K562 (cell line): ENCODE measurements at regions of chr4 and their contacts with region 1.

Region 1: GRCh38 chr4:38319456-38320342 is 344.3 kb upstream of the KLF3 start:
- DNase-seq: peak; percentile 83 to 94 (median 85)
- ATAC-seq: peak; percentile 81
- H3K4me3 ChIP-seq: no peak overlapping the region; the same call in 1 of the 2 replicates
- H3K27ac ChIP-seq: peak overlapping the region; percentile 84
- H3K4me1 ChIP-seq: peaks cover 8 to 29% of the 10 kb centered on the region in 2 experiments
- H3K27me3 ChIP-seq: no peaks in the 10 kb centered on the region
- CTCF ChIP-seq: peak; percentile 88 to 96 (median 92)
- EP300 ChIP-seq: peak; percentile 3; the same call in 1 of the 2 replicates
- POLR2A ChIP-seq: no peak
- RAD21 ChIP-seq: peak; percentile 91 to 93

Region 2: GRCh38 chr4:38078590-38079421 is 240.9 kb before region 1 on chr4:
- CTCF ChIA-PET with region 1: no interaction called
- POLR2A ChIA-PET with region 1: no interaction called
- in situ Hi-C with region 1: loop called (anchors 10 kb)
- intact Hi-C with region 1: no loop called
- DNase-seq: no peak
- ATAC-seq: no peak
- H3K4me3 ChIP-seq: no peak overlapping the region
- H3K27ac ChIP-seq: no peak overlapping the region
- H3K4me1 ChIP-seq: peaks cover 0 to 15% of the 10 kb centered on the region in 2 experiments; a peak in 4 of 5 replicates
- H3K27me3 ChIP-seq: no peaks in the 10 kb centered on the region; a peak in 2 of 5 replicates
- CTCF ChIP-seq: no peak
- EP300 ChIP-seq: no peak
- POLR2A ChIP-seq: no peak
- RAD21 ChIP-seq: no peak

Region 3: GRCh38 chr4:38243388-38244053 is 76.2 kb before region 1 on chr4:
- CTCF ChIA-PET with region 1: no interaction called
- POLR2A ChIA-PET with region 1: no interaction called
- in situ Hi-C with region 1: no loop called
- intact Hi-C with region 1: loop called (anchors 5 kb)
- DNase-seq: peak in 1 of 4 experiments; percentile 22
- ATAC-seq: peak; percentile 82
- H3K4me3 ChIP-seq: no peak overlapping the region
- H3K27ac ChIP-seq: peak overlapping the region; percentile 88
- H3K4me1 ChIP-seq: peaks cover 11 to 18% of the 10 kb centered on the region in 2 experiments
- H3K27me3 ChIP-seq: no peaks in the 10 kb centered on the region
- CTCF ChIP-seq: no peak
- EP300 ChIP-seq: no peak
- POLR2A ChIP-seq: no peak; the same call in 1 of the 2 replicates
- RAD21 ChIP-seq: no peak

Region 4: GRCh38 chr4:38461342-38461741 is 141.6 kb after region 1 on chr4:
- CTCF ChIA-PET with region 1: no interaction called
- POLR2A ChIA-PET with region 1: no interaction called
- in situ Hi-C with region 1: no loop called
- intact Hi-C with region 1: loop called (anchors 10 kb)
- DNase-seq: no peak
- ATAC-seq: no peak
- H3K4me3 ChIP-seq: no peak overlapping the region
- H3K27ac ChIP-seq: no peak overlapping the region
- H3K4me1 ChIP-seq: peaks cover 4 to 31% of the 10 kb centered on the region in 2 experiments; a peak in 4 of 5 replicates
- H3K27me3 ChIP-seq: no peaks in the 10 kb centered on the region
- CTCF ChIP-seq: no peak
- EP300 ChIP-seq: no peak
- POLR2A ChIP-seq: no peak
- RAD21 ChIP-seq: no peak

Region 5: DNA sequence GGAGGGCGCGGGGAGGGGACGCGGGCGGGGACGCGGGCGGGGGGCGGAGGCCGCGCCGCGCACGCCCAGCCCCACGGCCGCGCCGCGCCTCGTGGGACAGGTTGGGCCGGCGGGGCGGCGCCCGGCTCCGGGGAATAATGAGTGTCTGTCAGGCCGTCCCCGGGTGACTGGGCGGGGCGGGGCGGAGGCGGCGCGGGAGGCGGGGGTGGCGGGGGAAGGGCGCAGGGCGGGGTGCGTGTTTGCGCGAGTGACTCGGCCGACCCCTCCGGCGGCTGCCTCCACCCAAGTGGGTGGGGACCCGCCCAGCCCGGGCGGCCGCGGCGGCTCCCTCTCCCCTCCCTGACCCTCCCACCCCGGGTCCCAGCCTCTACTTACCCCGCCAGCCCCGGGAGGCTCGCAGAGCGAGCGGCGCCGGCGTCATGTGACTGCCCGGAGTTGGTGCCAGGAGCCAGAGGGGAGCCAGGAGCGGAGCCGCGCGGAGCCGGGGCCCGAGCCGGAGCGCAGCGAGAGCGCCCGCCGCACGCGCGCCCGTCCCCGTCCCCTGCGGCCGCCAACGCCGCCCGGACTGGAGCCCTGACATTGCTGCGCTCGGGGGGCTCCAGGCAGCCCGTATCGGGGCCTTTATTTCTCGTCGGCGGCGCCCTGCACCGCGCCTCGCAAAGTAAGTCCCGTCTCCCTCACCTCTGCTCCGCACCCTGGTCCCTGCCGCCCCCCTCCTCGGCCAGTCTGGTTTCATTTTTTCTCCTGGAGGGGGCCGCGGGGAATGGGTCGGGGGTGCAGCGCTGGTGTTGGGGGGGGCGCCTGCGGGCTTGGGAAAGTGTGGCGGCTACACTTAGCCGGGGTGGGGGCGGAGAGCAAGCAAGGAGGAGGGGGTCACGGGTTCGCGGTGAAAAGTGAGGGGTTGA is 344.4 kb after region 1 on chr4 and contains the start of gene KLF3:
- CTCF ChIA-PET with region 1: no interaction called
- POLR2A ChIA-PET with region 1: interaction called, 7 read pairs
- in situ Hi-C with region 1: no loop called
- intact Hi-C with region 1: loop called (anchors 2 kb)
- DNase-seq: peak; percentile 88 to 92 (median 90)
- ATAC-seq: peak; percentile 68
- H3K4me3 ChIP-seq: peak within 1 kb of the TSS; percentile 92
- H3K27ac ChIP-seq: peak within 1 kb of the TSS; percentile 98
- H3K4me1 ChIP-seq: peaks cover 17 to 33% of the 10 kb centered on the region in 2 experiments
- H3K27me3 ChIP-seq: no peaks in the 10 kb centered on the region
- CTCF ChIP-seq: no peak
- EP300 ChIP-seq: no peak
- POLR2A ChIP-seq: no peak; the same call in none of the 2 replicates
- RAD21 ChIP-seq: no peak
- polyA plus RNA-seq, gene KLF3: 9.9 to 16.8 TPM

Region 6: GRCh38 chr4:38730830-38731646 is 411.3 kb after region 1 on chr4:
- CTCF ChIA-PET with region 1: no interaction called
- POLR2A ChIA-PET with region 1: no interaction called
- in situ Hi-C with region 1: no loop called
- intact Hi-C with region 1: loop called (anchors 2 kb)
- DNase-seq: peak; percentile 75 to 87 (median 84)
- ATAC-seq: peak; percentile 98
- H3K4me3 ChIP-seq: no peak overlapping the region
- H3K27ac ChIP-seq: no peak overlapping the region
- H3K4me1 ChIP-seq: peaks cover 0 to 2% of the 10 kb centered on the region in 2 experiments; a peak in 3 of 5 replicates
- H3K27me3 ChIP-seq: no peaks in the 10 kb centered on the region
- CTCF ChIP-seq: peak; percentile 86 to 96 (median 88)
- EP300 ChIP-seq: no peak
- POLR2A ChIP-seq: no peak
- RAD21 ChIP-seq: peak; percentile 95 to 98